H1 (cell line): ENCODE measurements at regions of chr6 and their contacts with region 1.

Region 1: DNA sequence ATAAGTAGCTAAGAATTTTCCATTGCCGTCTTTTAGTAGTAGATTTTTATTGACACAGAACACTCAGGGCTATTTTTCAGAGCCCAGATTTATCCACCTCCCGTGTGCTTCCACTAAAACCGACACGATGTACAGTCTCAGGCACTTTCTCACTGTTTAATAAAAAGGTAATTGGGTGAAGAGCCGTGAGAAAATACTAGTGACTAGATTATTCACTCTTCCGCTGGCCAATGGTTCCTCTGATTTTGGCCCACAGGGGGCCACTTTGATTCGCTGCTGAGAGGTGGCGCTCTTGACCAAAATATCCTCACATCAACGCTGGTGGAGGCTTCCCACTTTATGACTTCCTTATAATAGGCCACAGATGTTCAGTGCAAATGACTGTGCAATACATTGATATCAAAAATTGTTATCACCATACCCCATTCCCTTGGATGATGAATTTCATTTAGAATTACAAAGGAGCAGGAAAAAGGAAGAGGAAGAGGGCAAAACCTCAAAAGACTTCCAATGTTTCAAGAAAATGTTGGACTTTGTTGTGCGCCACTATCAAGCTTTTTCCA is 12.3 kb upstream of the HDDC2 start:
- DNase-seq: peak in 1 of 2 experiments; percentile 59
- H3K4me3 ChIP-seq: no peak overlapping the region
- H3K27ac ChIP-seq: no peak overlapping the region
- H3K4me1 ChIP-seq: peaks cover 0 to 2% (median 0%) of the 10 kb centered on the region in 4 experiments; a peak in 1 of 7 replicates
- H3K27me3 ChIP-seq: no peaks in the 10 kb centered on the region
- CTCF ChIP-seq: peak; percentile 72 to 92 (median 81)
- EP300 ChIP-seq: no peak
- POLR2A ChIP-seq: no peak
- RAD21 ChIP-seq: peak; percentile 97 to 98

Region 2: GRCh38 chr6:124765280-124765679 is 548.8 kb before region 1 on chr6:
- CTCF ChIA-PET with region 1: no interaction called
- POLR2A ChIA-PET with region 1: no interaction called
- DNase-seq: no peak
- H3K4me3 ChIP-seq: no peak overlapping the region
- H3K27ac ChIP-seq: no peak overlapping the region
- H3K4me1 ChIP-seq: no peaks in the 10 kb centered on the region
- H3K27me3 ChIP-seq: peaks cover 0 to 1% (median 0%) of the 10 kb centered on the region in 4 experiments; a peak in 1 of 7 replicates
- CTCF ChIP-seq: no peak
- EP300 ChIP-seq: no peak
- POLR2A ChIP-seq: no peak
- RAD21 ChIP-seq: no peak

Region 3: GRCh38 chr6:125050663-125051318 is 263.3 kb before region 1 on chr6:
- CTCF ChIA-PET with region 1: no interaction called
- POLR2A ChIA-PET with region 1: no interaction called
- DNase-seq: no peak
- H3K4me3 ChIP-seq: no peak overlapping the region
- H3K27ac ChIP-seq: no peak overlapping the region
- H3K4me1 ChIP-seq: peaks cover 0 to 7% (median under 1%) of the 10 kb centered on the region in 4 experiments; a peak in 4 of 7 replicates
- H3K27me3 ChIP-seq: no peaks in the 10 kb centered on the region
- CTCF ChIP-seq: no peak
- EP300 ChIP-seq: no peak
- POLR2A ChIP-seq: no peak
- RAD21 ChIP-seq: no peak

Region 4: GRCh38 chr6:125503181-125503580 is 189.1 kb after region 1 on chr6:
- CTCF ChIA-PET with region 1: interaction called, 17 read pairs
- POLR2A ChIA-PET with region 1: no interaction called
- DNase-seq: no peak
- H3K4me3 ChIP-seq: peak overlapping the region in 1 of 4 experiments; percentile 18; a peak in 1 of 8 replicates
- H3K27ac ChIP-seq: no peak overlapping the region
- H3K4me1 ChIP-seq: peaks cover 0 to 13% (median 7%) of the 10 kb centered on the region in 4 experiments; a peak in 5 of 7 replicates
- H3K27me3 ChIP-seq: no peaks in the 10 kb centered on the region
- CTCF ChIP-seq: no peak
- EP300 ChIP-seq: no peak
- POLR2A ChIP-seq: no peak
- RAD21 ChIP-seq: peak in 1 of 2 experiments; percentile 1; a peak in 1 of 4 replicates

Region 5: DNA sequence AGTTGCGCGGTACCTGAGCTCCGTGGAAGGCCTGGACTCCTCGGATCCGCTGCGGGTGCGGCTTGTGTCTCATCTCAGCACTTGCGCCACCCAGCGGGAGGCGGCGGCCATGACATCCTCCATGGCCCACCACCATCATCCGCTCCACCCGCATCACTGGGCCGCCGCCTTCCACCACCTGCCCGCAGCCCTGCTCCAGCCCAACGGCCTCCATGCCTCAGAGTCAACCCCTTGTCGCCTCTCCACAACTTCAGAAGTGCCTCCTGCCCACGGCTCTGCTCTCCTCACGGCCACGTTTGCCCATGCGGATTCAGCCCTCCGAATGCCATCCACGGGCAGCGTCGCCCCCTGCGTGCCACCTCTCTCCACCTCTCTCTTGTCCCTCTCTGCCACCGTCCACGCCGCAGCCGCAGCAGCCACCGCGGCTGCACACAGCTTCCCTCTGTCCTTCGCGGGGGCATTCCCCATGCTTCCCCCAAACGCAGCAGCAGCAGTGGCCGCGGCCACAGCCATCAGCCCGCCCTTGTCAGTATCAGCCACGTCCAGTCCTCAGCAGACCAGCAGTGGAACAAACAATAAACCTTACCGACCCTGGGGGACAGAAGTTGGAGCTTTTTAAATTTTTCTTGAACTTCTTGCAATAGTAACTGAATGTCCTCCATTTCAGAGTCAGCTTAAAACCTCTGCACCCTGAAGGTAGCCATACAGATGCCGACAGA is 445.2 kb after region 1 on chr6:
- CTCF ChIA-PET with region 1: interaction called, 158 read pairs
- POLR2A ChIA-PET with region 1: interaction called, 3 read pairs
- DNase-seq: peak in 1 of 2 experiments; percentile 94
- H3K4me3 ChIP-seq: no peak overlapping the region
- H3K27ac ChIP-seq: no peak overlapping the region
- H3K4me1 ChIP-seq: peaks cover 0 to 3% (median 0%) of the 10 kb centered on the region in 4 experiments; a peak in 1 of 7 replicates
- H3K27me3 ChIP-seq: no peaks in the 10 kb centered on the region
- CTCF ChIP-seq: peak; percentile 65 to 94 (median 83)
- EP300 ChIP-seq: no peak
- POLR2A ChIP-seq: no peak
- RAD21 ChIP-seq: peak; percentile 76 to 81

Region 6: GRCh38 chr6:125779924-125780539 is 465.9 kb after region 1 on chr6:
- CTCF ChIA-PET with region 1: interaction called, 10 read pairs
- POLR2A ChIA-PET with region 1: no interaction called
- DNase-seq: peak in 1 of 2 experiments; percentile 94
- H3K4me3 ChIP-seq: peak overlapping the region; percentile 78 to 97 (median 87)
- H3K27ac ChIP-seq: no peak overlapping the region
- H3K4me1 ChIP-seq: no peaks in the 10 kb centered on the region; a peak in 1 of 7 replicates
- H3K27me3 ChIP-seq: no peaks in the 10 kb centered on the region
- CTCF ChIP-seq: peak in 2 of 3 experiments; percentile 5 to 11; a peak in 1 of 4 replicates
- EP300 ChIP-seq: peak in 1 of 2 experiments; percentile 25; a peak in 1 of 3 replicates
- POLR2A ChIP-seq: no peak; a peak in 1 of 3 replicates
- RAD21 ChIP-seq: no peak